ENCODE measurements at regions of chr19 and their contacts with region 1.

Region 1: DNA sequence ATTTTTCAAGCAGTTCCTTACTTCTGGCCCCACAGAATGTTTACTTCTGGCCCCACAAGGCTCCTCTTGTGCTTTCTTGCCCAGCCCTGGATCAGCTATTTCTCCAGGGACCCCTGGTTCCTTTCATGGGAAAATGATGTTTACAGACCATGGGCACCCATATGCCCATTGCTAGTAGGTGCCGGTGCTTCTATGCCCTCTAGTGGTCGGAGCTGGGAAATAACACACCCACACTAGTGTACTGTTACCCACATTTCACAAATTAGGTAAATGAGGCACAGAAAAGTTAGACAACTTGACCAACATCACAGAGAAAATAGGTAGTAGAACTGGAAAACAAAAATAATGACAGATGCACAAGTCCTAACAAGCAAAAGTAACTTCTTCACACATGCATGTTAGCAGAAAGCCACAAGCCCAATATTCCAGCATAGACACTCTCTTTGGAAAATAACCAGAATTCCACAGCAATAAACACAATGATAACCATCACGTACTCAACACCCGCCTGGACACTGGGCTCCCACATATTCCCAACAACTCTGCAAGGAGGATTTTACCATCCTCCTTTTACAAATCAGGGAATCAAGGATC is 1.3 kb upstream of the CEACAM6 start:
- DNase-seq: peak; percentile 76
- ATAC-seq: peak; percentile 94
- H3K4me3 ChIP-seq: no peak overlapping the region
- H3K4me3 Mint-ChIP-seq: no peak overlapping the region
- H3K27ac ChIP-seq: no peak overlapping the region
- H3K27ac Mint-ChIP-seq: no peak overlapping the region
- H3K4me1 ChIP-seq: peaks cover 0 to 8% of the 10 kb centered on the region in 2 donors
- H3K4me1 Mint-ChIP-seq: peaks cover 1% of the 10 kb centered on the region
- H3K27me3 ChIP-seq: peaks cover 0 to 7% (median 0%) of the 10 kb centered on the region in 4 experiments
- H3K27me3 Mint-ChIP-seq: peaks cover 11% of the 10 kb centered on the region
- CTCF ChIP-seq: peak; percentile 76

Region 2: GRCh38 chr19:41734617-41735016 is 19.4 kb before region 1 on chr19:
- CTCF ChIA-PET with region 1: interaction called, 39 read pairs
- POLR2A ChIA-PET with region 1: no interaction called
- intact Hi-C with region 1: no loop called
- DNase-seq: no peak
- ATAC-seq: no peak
- H3K4me3 ChIP-seq: no peak overlapping the region
- H3K4me3 Mint-ChIP-seq: no peak overlapping the region
- H3K27ac ChIP-seq: no peak overlapping the region
- H3K27ac Mint-ChIP-seq: no peak overlapping the region
- H3K4me1 ChIP-seq: no peaks in the 10 kb centered on the region
- H3K4me1 Mint-ChIP-seq: no peaks in the 10 kb centered on the region
- H3K27me3 ChIP-seq: peaks cover 0 to 6% (median 0%) of the 10 kb centered on the region in 4 experiments
- H3K27me3 Mint-ChIP-seq: peaks cover 42% of the 10 kb centered on the region
- CTCF ChIP-seq: no peak

Region 3: DNA sequence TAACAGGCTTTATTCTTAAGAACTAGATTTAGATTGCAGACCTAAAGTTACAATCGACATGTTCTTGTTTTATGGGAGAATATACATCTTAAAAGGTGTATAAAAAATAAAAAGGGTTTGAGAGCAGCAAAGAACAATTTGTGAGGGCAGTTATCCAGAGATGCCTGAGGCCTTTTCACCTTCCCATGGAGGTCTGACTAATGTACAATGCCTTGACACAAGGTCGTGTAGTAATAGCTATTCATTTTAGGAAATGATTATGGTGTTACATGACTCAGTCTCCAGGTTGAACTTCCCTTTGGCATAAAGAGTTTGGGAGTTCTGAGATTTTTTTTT is 21.3 kb after region 1 on chr19:
- CTCF ChIA-PET with region 1: interaction called, 63 read pairs
- POLR2A ChIA-PET with region 1: no interaction called
- intact Hi-C with region 1: no loop called
- DNase-seq: no peak
- ATAC-seq: no peak
- H3K4me3 ChIP-seq: no peak overlapping the region
- H3K4me3 Mint-ChIP-seq: no peak overlapping the region
- H3K27ac ChIP-seq: no peak overlapping the region
- H3K27ac Mint-ChIP-seq: no peak overlapping the region
- H3K4me1 ChIP-seq: no peaks in the 10 kb centered on the region
- H3K4me1 Mint-ChIP-seq: no peaks in the 10 kb centered on the region
- H3K27me3 ChIP-seq: no peaks in the 10 kb centered on the region
- H3K27me3 Mint-ChIP-seq: peaks cover 14% of the 10 kb centered on the region
- CTCF ChIP-seq: no peak

Region 4: GRCh38 chr19:41785653-41786052 is 31.6 kb after region 1 on chr19:
- CTCF ChIA-PET with region 1: interaction called, 114 read pairs
- POLR2A ChIA-PET with region 1: no interaction called
- intact Hi-C with region 1: loop called (anchors 1 kb)
- DNase-seq: peak; percentile 84
- ATAC-seq: peak; percentile 93
- H3K4me3 ChIP-seq: peak overlapping the region in 2 of 5 experiments; percentile 11 to 22
- H3K4me3 Mint-ChIP-seq: peak overlapping the region; percentile 74
- H3K27ac ChIP-seq: no peak overlapping the region
- H3K27ac Mint-ChIP-seq: no peak overlapping the region
- H3K4me1 ChIP-seq: peaks cover 24 to 26% of the 10 kb centered on the region in 2 donors
- H3K4me1 Mint-ChIP-seq: peaks cover 25% of the 10 kb centered on the region
- H3K27me3 ChIP-seq: peaks cover 0 to 10% (median 0%) of the 10 kb centered on the region in 4 experiments
- H3K27me3 Mint-ChIP-seq: peaks cover 32% of the 10 kb centered on the region
- CTCF ChIP-seq: peak; percentile 88

Region 5: GRCh38 chr19:41795031-41795461 is 41.0 kb after region 1 on chr19:
- CTCF ChIA-PET with region 1: interaction called, 75 read pairs
- POLR2A ChIA-PET with region 1: no interaction called
- intact Hi-C with region 1: no loop called
- DNase-seq: peak; percentile 74
- ATAC-seq: peak; percentile 92
- H3K4me3 ChIP-seq: no peak overlapping the region
- H3K4me3 Mint-ChIP-seq: no peak overlapping the region
- H3K27ac ChIP-seq: no peak overlapping the region
- H3K27ac Mint-ChIP-seq: peak overlapping the region; percentile 2
- H3K4me1 ChIP-seq: peaks cover 0 to 2% of the 10 kb centered on the region in 2 donors
- H3K4me1 Mint-ChIP-seq: peaks cover 6% of the 10 kb centered on the region
- H3K27me3 ChIP-seq: peaks cover 0 to 8% (median 3%) of the 10 kb centered on the region in 4 experiments
- H3K27me3 Mint-ChIP-seq: peaks cover 25% of the 10 kb centered on the region
- CTCF ChIP-seq: peak; percentile 91

Region 6: GRCh38 chr19:41801792-41802211 is 47.8 kb after region 1 on chr19:
- CTCF ChIA-PET with region 1: interaction called, 23 read pairs
- POLR2A ChIA-PET with region 1: no interaction called
- intact Hi-C with region 1: no loop called
- DNase-seq: peak; percentile 68
- ATAC-seq: peak; percentile 53
- H3K4me3 ChIP-seq: peak overlapping the region in 2 of 5 experiments; percentile 1 to 15
- H3K4me3 Mint-ChIP-seq: peak overlapping the region; percentile 50
- H3K27ac ChIP-seq: peak overlapping the region; percentile 37 to 81
- H3K27ac Mint-ChIP-seq: peak overlapping the region; percentile 86
- H3K4me1 ChIP-seq: peaks cover 29 to 46% of the 10 kb centered on the region in 2 donors
- H3K4me1 Mint-ChIP-seq: peaks cover 41% of the 10 kb centered on the region
- H3K27me3 ChIP-seq: no peaks in the 10 kb centered on the region
- H3K27me3 Mint-ChIP-seq: no peaks in the 10 kb centered on the region
- CTCF ChIP-seq: no peak